Left colon (tissue), 2 donors: ENCODE measurements at regions of chr18 and their contacts with region 1.

Region 1: DNA sequence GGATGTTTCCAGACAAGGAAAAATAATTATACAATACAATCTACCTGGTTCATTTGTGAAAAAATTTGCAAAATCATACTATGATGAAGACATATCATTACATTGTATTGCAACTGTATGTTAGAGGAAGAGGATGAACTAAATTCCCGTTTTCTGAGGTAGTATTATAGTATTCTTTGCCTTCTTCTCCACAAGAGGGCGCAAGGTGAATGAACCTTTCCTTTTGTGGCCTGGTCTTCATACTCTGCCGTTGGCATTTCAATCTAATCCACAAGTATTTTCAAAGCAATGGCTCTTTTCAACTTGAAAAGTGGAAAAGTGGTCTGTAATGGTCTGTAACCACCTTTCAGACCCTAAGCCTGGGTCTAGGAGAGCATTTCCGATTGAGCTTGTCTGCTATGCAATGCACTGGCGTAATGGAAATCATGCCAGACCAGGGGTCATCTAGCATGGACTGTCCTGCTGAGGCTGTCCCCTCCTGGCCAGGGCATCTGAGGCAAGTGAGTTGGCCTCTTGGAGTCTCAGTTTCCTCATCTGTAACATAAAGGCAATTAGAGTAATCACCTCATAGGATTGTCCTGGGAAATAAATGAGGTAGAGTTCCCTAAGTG is 30.8 kb upstream of the ZNF396 start:
- DNase-seq: peak; percentile 31 to 38
- ATAC-seq: peak; percentile 66

Region 2: DNA sequence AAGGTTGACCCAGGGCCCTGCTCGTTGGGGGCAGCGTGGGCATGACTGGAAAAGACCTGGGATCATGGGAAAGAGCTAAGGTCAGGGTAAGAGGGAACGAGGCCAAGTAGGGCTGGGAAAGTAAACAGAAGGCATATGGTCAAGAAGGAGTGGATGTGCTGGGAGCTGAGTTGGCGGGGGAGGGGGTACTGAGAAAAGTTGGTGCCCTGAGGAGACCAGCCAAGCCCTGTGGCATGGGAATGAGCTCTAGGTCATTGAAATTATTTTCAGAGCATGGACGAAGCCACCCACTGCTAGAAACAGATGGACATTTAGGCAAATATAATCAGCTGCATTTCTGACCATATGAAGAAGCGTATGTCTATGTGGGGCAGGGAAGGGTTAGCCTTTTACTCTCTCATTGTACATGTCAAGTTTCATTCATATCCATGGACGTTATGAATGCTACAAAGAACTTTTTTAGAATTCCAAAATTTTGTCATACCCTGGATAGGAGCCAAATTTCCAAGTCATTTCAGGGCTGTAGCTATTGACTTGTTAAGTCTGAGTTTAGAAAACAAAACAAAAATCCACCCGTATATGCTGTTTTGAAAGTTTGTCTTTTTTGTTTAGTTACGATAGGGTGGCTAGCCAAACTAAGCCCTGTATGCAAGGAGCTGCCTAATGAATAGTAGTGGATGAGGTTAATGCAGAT is 347.7 kb before region 1 on chr18:
- intact Hi-C with region 1: no loop called
- DNase-seq: peak in 1 of 2 donors; percentile 16
- ATAC-seq: peak; percentile 62

Region 3: GRCh38 chr18:35282353-35282752 is 125.6 kb before region 1 on chr18:
- intact Hi-C with region 1: no loop called
- DNase-seq: no peak
- ATAC-seq: peak; percentile 44

Region 4: DNA sequence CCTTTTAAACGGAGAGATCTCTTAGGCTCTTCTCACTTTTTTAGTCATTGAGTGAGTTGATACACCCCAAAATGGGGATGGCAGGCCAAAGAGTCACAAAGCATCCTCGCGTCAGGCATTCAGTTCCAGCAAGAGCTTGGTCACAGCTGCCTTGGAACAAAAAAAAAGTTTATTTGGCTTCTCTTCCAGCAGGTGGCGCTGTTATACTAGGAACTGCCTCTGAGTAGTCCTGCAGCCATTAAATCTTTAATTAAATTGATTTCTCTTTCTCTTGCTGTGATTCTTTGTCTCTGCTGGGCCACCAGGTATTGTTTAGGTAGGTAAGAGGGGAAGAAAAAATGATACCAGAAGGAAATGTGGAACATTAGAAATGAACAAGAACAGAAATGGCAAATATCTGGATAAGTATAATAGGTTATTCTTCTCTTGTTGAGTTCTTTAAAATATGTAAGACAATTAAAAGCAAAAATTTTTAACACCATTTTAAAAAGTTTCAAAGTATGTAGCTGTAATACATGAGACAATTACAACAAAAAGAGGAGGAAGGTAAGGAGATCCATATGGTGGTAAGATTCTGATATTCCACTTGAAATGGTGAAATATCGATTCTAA is 348.6 kb after region 1 on chr18:
- intact Hi-C with region 1: loop called in 1 of 2 experiments (anchors 10 kb)
- DNase-seq: peak in 1 of 2 donors; percentile 39
- ATAC-seq: peak; percentile 73